Activated CD4-positive, alpha-beta T cell treated with anti-CD3 and anti-CD28 coated beads, Interleukin-2, amount 10 ng/mL, durations not matched to agents 24 days and 14 days (primary cell): ENCODE measurements at regions of chr10 and their contacts with region 1.

Region 1: GRCh38 chr10:52226197-52226847 is 87.8 kb upstream of the DKK1 start:
- DNase-seq: no peak
- H3K4me3 Mint-ChIP-seq: no peak overlapping the region
- H3K27ac Mint-ChIP-seq: no peak overlapping the region
- H3K4me1 Mint-ChIP-seq: no peaks in the 10 kb centered on the region
- H3K27me3 Mint-ChIP-seq: no peaks in the 10 kb centered on the region

Region 2: GRCh38 chr10:52252307-52252706 is 26.0 kb after region 1 on chr10:
- intact Hi-C with region 1: no loop called
- DNase-seq: no peak
- H3K4me3 Mint-ChIP-seq: no peak overlapping the region
- H3K27ac Mint-ChIP-seq: no peak overlapping the region
- H3K4me1 Mint-ChIP-seq: no peaks in the 10 kb centered on the region
- H3K27me3 Mint-ChIP-seq: no peaks in the 10 kb centered on the region

Region 3: DNA sequence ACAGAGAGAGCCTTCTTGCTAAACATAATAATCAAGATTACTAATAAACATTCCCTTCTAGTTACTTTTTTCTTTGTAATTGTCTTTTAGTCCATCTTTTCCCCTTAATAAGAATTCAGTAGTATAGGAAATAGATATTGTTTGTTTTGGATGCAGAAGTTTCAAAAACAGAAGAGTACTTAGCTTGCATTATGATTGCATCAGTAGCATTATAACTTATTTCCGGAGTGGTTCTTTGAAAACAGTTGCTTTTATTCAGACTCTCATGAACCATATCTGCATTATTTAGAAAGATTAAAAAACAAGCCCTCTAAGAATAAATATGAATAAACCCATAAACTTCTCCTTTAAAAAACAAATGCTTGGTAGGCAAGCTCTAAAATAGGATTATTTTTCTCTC is 53.7 kb after region 1 on chr10:
- intact Hi-C with region 1: loop called (anchors 2 kb)
- DNase-seq: no peak
- H3K4me3 Mint-ChIP-seq: no peak overlapping the region
- H3K27ac Mint-ChIP-seq: no peak overlapping the region
- H3K4me1 Mint-ChIP-seq: no peaks in the 10 kb centered on the region
- H3K27me3 Mint-ChIP-seq: no peaks in the 10 kb centered on the region